ENCODE measurements at regions of chr10 and their contacts with region 1.

Region 1: DNA sequence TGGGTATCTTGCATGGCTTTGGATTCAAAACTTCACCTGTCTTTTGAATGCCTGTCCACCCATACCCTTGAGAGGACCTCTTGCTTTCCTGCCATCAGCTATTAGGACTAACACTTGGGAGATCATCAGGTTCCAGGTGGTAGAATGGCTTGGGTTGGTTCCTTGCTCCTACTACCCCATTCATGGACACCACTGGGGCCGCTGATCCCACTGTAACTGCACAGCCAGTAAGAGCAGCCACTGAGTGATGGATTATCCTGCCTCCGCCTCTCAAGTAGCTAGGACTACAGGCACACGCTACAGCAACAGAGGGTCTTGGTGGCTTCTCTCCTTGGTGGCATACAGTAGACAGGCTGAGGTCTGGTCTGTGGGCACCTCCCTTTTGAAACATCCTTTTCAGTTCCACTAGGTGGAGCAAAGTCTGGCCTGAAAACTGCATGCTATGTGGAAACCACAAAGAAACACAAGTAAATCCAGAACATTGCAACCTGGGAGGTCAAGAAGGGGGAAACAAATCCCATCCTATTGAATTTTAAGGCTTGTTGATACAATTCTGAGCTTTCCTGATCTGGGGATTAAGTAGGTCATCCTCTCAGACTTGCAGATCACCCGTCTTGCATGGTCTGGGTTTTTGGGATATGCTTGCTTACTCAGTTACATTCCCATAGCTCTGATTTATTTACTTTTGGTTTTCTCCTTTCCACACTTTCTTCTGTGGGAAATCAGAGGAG is 9.4 kb downstream of the WBP1L start:
- DNase-seq: peak in 3 of 9 donors; percentile 13 to 34 (median 33)
- ATAC-seq: peak; percentile 80
- H3K4me3 ChIP-seq: no peak overlapping the region
- H3K4me3 Mint-ChIP-seq: peak overlapping the region in 7 of 10 donors; percentile 5 to 62 (median 29)
- H3K27ac ChIP-seq: no peak overlapping the region
- H3K27ac Mint-ChIP-seq: peak overlapping the region in 7 of 9 donors; percentile 20 to 72 (median 62)
- H3K4me1 ChIP-seq: peaks cover 8 to 26% of the 10 kb centered on the region in 2 donors
- H3K4me1 Mint-ChIP-seq: peaks cover 39 to 66% (median 56%) of the 10 kb centered on the region in 7 donors
- H3K27me3 ChIP-seq: no peaks in the 10 kb centered on the region
- H3K27me3 Mint-ChIP-seq: no peaks in the 10 kb centered on the region

Region 2: GRCh38 chr10:102776779-102777456 is 23.8 kb after region 1 on chr10:
- CTCF ChIA-PET with region 1: no interaction called
- POLR2A ChIA-PET with region 1: no interaction called
- intact Hi-C with region 1: loop called in 1 of 2 experiments (anchors 2 kb)
- DNase-seq: peak in 2 of 9 donors; percentile 21 to 61
- ATAC-seq: peak; percentile 10
- H3K4me3 ChIP-seq: no peak overlapping the region
- H3K4me3 Mint-ChIP-seq: peak overlapping the region in 9 of 10 donors; percentile 68 to 86 (median 72)
- H3K27ac ChIP-seq: no peak overlapping the region
- H3K27ac Mint-ChIP-seq: peak overlapping the region in 8 of 9 donors; percentile 57 to 91 (median 80)
- H3K4me1 ChIP-seq: peaks cover 7 to 25% of the 10 kb centered on the region in 2 donors
- H3K4me1 Mint-ChIP-seq: peaks cover 42 to 80% (median 77%) of the 10 kb centered on the region in 7 donors
- H3K27me3 ChIP-seq: no peaks in the 10 kb centered on the region
- H3K27me3 Mint-ChIP-seq: no peaks in the 10 kb centered on the region